ENCODE measurements at regions of chr7 and their contacts with region 1.

Region 1: GRCh38 chr7:67823345-67823744 is 826.7 kb downstream of the TYW1 start:
- DNase-seq: no peak
- H3K4me3 ChIP-seq: no peak overlapping the region
- H3K27ac ChIP-seq: no peak overlapping the region
- H3K4me1 ChIP-seq: no peaks in the 10 kb centered on the region
- H3K27me3 ChIP-seq: no peaks in the 10 kb centered on the region
- CTCF ChIP-seq: no peak
- POLR2A ChIP-seq: no peak

Region 2: DNA sequence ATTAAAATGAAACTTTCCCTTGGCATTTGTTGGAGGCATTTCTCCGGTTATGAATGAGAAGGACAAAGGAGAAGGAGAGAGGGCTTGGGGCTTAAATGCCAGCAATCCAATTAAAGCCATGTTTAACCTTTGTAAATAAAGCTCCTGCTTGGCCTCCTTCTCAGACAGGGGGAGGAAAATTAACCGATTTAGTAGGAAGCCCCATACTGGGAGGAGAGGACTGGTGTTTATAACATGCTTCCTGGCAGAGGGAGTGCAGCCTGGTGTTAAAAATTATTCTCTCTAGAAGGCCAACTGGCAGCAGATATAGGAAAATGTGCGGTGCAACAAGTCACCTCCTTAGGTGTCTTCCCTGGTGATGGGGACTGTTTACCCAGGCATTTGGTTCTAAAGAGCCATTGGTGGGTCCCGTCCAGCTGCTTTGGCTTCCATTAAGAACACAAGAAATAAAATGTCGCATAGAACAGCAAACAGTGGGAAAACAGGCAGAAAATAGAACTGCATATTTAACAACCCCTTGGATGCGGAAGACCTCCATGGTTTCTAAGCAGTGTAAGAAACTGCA is 19.7 kb after region 1 on chr7:
- intact Hi-C with region 1: loop called (anchors 2 kb)
- DNase-seq: no peak
- H3K4me3 ChIP-seq: no peak overlapping the region
- H3K27ac ChIP-seq: no peak overlapping the region
- H3K4me1 ChIP-seq: no peaks in the 10 kb centered on the region
- H3K27me3 ChIP-seq: no peaks in the 10 kb centered on the region
- CTCF ChIP-seq: no peak
- POLR2A ChIP-seq: no peak

Measured in breast epithelium (tissue), 4 donors.